ENCODE measurements at regions of chr12 and their contacts with region 1.

Region 1: DNA sequence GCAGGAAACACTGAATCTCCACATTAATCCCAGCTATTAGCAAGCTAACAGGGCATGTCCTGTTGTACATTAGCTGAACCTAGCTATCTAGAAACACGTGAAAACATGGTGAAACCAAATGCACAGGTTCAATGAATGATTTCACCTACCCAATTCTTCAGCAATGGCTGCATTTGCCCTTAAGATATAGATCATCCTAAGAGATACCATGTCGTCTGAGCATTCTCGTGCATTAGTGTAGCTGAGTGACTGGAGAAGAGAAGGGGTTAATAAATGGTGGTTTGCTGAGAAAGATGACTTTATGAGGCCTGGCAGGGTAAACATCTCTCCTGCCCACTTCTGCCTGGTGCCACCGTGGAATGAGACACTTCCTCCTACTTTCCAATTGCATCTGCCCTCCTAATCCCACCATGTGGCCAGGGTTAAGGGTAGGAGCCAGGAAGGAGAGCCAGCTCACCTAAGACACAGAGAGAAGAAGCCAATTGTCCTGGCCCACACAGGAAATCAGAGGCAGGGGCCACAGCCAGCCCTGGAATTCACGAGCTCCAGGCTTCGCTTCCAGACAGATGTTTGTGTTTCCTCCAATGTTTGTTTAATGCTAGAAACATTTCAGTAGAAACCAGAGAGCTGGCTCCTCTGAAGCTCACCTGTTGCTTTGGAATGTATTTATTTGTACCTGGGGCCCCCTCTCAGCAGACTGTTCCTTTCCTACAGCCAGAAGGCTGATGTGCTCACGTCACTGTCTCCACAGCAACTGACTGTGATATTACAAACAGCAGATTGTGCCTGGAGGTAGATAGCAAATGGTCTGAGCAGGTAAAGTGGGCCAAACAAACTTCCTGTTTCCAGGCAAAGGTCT is 126.0 kb upstream of the PARP11 start:
- DNase-seq: peak in 19 of 35 experiments; percentile 7 to 52 (median 15)
- ATAC-seq: peak in 1 of 4 experiments; percentile 85
- H3K4me3 ChIP-seq: no peak overlapping the region
- H3K4me3 Mint-ChIP-seq: no peak overlapping the region
- H3K27ac ChIP-seq: no peak overlapping the region
- H3K27ac Mint-ChIP-seq: peak overlapping the region; percentile 11 to 66
- H3K4me1 ChIP-seq: peaks cover 9 to 21% of the 10 kb centered on the region in 2 experiments
- H3K4me1 Mint-ChIP-seq: peaks cover 21 to 47% (median 35%) of the 10 kb centered on the region in 3 donors
- H3K27me3 ChIP-seq: no peaks in the 10 kb centered on the region
- H3K27me3 Mint-ChIP-seq: no peaks in the 10 kb centered on the region

Region 2: DNA sequence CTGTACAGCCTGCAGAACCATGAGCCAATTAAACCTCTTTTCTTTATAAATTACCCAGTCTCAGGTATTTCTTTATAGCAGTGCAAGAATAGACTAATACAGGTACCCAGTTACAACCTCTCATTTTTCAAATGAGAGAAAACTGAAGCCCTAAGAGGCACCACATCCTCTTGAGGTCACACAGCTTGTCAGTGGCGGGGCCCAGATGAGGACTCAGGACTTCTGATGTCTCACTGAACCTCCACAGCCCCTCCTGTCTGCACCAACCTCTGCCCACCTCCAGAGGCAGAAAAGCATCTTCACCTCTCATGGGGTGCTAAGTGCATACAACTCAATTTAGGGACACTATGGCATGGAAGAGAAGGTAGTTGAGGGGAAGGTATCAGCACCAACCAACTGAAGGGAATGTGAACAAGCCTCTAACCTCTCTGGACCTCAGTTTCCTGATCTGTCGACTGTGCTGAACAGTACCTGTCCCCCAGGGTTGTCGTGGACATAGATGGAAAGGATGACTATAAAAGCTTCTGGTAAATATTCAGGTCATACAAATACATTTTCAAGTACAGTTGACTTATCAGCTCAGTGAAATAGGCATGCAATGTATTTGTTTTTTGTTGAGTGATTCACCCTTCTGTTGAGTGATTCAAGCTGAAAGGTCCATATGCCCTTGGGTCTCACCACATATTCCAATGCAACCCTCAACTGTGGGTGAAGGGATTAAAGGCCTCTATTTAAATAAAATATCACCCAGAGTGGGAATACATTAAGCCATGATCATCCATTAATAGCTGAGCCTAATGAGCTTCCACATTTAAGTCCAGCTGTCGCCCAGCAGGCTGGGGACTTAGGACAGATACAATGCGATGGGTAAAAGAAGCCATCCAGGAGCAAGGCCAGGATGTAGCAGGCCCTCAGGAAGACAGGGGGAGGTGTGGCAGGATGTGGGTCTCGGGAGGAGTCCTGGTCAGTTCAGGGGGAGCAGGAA is 366.6 kb before region 1 on chr12:
- CTCF ChIA-PET with region 1: no interaction called
- POLR2A ChIA-PET with region 1: no interaction called
- DNase-seq: no peak
- ATAC-seq: no peak
- H3K4me3 ChIP-seq: no peak overlapping the region
- H3K4me3 Mint-ChIP-seq: no peak overlapping the region
- H3K27ac ChIP-seq: no peak overlapping the region
- H3K27ac Mint-ChIP-seq: no peak overlapping the region
- H3K4me1 ChIP-seq: no peaks in the 10 kb centered on the region
- H3K4me1 Mint-ChIP-seq: no peaks in the 10 kb centered on the region
- H3K27me3 ChIP-seq: no peaks in the 10 kb centered on the region
- H3K27me3 Mint-ChIP-seq: no peaks in the 10 kb centered on the region

Region 3: DNA sequence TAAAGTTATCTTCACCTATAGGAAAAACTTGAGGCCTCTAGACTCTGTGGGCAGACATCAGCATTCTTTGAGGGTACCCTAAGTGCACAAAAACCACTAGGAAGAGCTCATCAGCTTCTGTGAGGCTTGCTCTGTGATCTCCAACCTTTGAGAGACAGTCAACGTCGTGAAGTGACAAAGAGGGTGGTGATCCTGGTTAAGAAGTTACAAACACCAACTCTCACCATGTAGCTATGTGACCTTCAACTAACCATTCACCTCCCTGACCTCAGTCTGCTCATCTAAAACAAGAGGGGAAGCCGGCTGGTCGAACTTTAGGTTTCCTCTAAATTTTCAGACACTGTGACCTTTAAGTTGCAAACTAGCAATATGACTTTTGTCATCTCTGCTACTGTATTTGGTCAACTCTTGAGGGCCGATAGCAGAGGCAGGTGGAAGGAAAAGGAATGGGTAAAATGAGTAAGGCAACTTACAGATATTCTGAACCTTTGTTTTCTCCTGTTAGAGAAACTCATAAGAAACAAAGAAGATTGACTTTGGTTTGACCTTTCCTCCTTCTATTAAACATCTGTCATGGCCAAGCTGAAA is 22.8 kb before region 1 on chr12:
- CTCF ChIA-PET with region 1: no interaction called
- POLR2A ChIA-PET with region 1: no interaction called
- DNase-seq: no peak
- ATAC-seq: peak in 2 of 4 experiments; percentile 18 to 38
- H3K4me3 ChIP-seq: no peak overlapping the region
- H3K4me3 Mint-ChIP-seq: peak overlapping the region in 1 of 3 donors; percentile 64
- H3K27ac ChIP-seq: peak overlapping the region; percentile 32
- H3K27ac Mint-ChIP-seq: peak overlapping the region; percentile 96 to 97
- H3K4me1 ChIP-seq: peaks cover 52 to 56% of the 10 kb centered on the region in 2 experiments
- H3K4me1 Mint-ChIP-seq: peaks cover 70 to 74% (median 70%) of the 10 kb centered on the region in 3 donors
- H3K27me3 ChIP-seq: no peaks in the 10 kb centered on the region
- H3K27me3 Mint-ChIP-seq: no peaks in the 10 kb centered on the region

Region 4: DNA sequence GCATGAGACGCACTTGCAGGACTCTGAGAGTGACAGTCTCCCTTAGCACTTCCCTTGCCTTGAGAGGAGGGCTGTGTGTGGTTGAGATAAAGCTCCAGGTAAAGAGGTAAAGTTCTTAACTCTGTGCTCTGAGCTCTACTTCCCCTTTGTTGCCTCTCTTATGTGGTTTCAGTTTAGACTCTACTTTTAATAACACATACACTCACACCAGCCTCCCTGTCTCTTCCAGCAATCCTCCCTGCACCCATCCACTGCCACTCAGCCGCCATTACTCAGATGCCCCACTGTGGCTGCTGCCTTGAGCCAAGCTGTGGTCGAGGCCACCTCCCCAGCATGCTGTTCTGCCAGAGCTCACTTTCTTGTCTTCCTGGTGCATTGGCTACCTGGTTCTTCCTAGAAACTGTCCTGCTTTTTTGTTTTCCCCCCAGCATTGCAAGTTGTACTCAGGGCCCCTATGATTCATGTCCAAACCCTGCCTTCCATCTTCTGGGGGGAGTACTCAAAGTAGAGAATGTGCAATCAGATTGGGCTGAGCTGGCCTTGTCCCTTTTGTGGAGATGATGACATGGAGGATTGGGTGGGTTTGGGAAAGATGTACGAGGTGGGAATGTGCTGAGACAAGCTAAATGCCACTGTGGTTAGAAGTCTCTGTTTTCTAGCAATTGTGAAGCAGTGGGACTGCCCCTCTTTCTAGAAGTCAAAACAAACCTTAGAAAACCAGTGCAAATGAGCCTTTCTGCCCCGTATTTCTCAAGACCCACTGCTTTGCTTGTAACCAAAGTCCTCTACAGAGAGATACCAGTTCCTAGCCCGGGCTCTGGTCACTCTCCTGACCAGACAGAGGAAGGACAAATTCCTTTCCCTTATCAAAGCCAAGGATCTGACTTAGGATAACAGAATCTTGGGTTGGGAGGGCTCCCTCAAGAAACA is 10.4 kb before region 1 on chr12:
- CTCF ChIA-PET with region 1: interaction called, 3 to 10 read pairs
- POLR2A ChIA-PET with region 1: no interaction called
- DNase-seq: peak in 26 of 35 experiments; percentile 6 to 55 (median 20)
- ATAC-seq: peak; percentile 93 to 97 (median 96)
- H3K4me3 ChIP-seq: no peak overlapping the region
- H3K4me3 Mint-ChIP-seq: peak overlapping the region; percentile 50 to 71 (median 52)
- H3K27ac ChIP-seq: peak overlapping the region; percentile 56
- H3K27ac Mint-ChIP-seq: peak overlapping the region; percentile 96 to 99
- H3K4me1 ChIP-seq: peaks cover 21 to 22% of the 10 kb centered on the region in 2 experiments
- H3K4me1 Mint-ChIP-seq: peaks cover 28 to 31% (median 29%) of the 10 kb centered on the region in 3 donors
- H3K27me3 ChIP-seq: no peaks in the 10 kb centered on the region
- H3K27me3 Mint-ChIP-seq: no peaks in the 10 kb centered on the region

Region 5: GRCh38 chr12:4037747-4038312 is 38.6 kb after region 1 on chr12:
- CTCF ChIA-PET with region 1: interaction called, 4 to 10 read pairs
- POLR2A ChIA-PET with region 1: no interaction called
- DNase-seq: peak in 4 of 35 experiments; percentile 8 to 43 (median 24)
- ATAC-seq: no peak
- H3K4me3 ChIP-seq: no peak overlapping the region
- H3K4me3 Mint-ChIP-seq: no peak overlapping the region
- H3K27ac ChIP-seq: no peak overlapping the region
- H3K27ac Mint-ChIP-seq: no peak overlapping the region
- H3K4me1 ChIP-seq: no peaks in the 10 kb centered on the region
- H3K4me1 Mint-ChIP-seq: peaks cover 0 to 13% (median 2%) of the 10 kb centered on the region in 3 donors
- H3K27me3 ChIP-seq: no peaks in the 10 kb centered on the region
- H3K27me3 Mint-ChIP-seq: no peaks in the 10 kb centered on the region

Measured in T-cell (primary cell).